ENCODE measurements at regions of chr12 and their contacts with region 1.

Region 1: GRCh38 chr12:49945394-49946080 is 5.0 kb upstream of the AQP2 start:
- DNase-seq: peak; percentile 66 to 80 (median 71)
- H3K4me3 ChIP-seq: peak overlapping the region in 1 of 2 donors; percentile 12
- H3K4me3 Mint-ChIP-seq: peak overlapping the region; percentile 84 to 96 (median 89)
- H3K27ac ChIP-seq: peak overlapping the region; percentile 29
- H3K27ac Mint-ChIP-seq: peak overlapping the region; percentile 76 to 94 (median 89)
- H3K4me1 ChIP-seq: peaks cover 40% of the 10 kb centered on the region
- H3K4me1 Mint-ChIP-seq: peaks cover 16 to 54% (median 23%) of the 10 kb centered on the region in 4 donors
- H3K27me3 ChIP-seq: no peaks in the 10 kb centered on the region
- H3K27me3 Mint-ChIP-seq: peaks cover 0 to 3% of the 10 kb centered on the region in 2 donors

Region 2: GRCh38 chr12:49866859-49867579 is 78.5 kb before region 1 on chr12:
- CTCF ChIA-PET with region 1: interaction called, 17 read pairs
- POLR2A ChIA-PET with region 1: no interaction called
- intact Hi-C with region 1: no loop called
- DNase-seq: peak; percentile 65 to 73 (median 67)
- H3K4me3 ChIP-seq: no peak overlapping the region
- H3K4me3 Mint-ChIP-seq: no peak overlapping the region
- H3K27ac ChIP-seq: no peak overlapping the region
- H3K27ac Mint-ChIP-seq: no peak overlapping the region
- H3K4me1 ChIP-seq: no peaks in the 10 kb centered on the region
- H3K4me1 Mint-ChIP-seq: no peaks in the 10 kb centered on the region
- H3K27me3 ChIP-seq: no peaks in the 10 kb centered on the region
- H3K27me3 Mint-ChIP-seq: peaks cover 2 to 4% of the 10 kb centered on the region in 2 donors

Region 3: DNA sequence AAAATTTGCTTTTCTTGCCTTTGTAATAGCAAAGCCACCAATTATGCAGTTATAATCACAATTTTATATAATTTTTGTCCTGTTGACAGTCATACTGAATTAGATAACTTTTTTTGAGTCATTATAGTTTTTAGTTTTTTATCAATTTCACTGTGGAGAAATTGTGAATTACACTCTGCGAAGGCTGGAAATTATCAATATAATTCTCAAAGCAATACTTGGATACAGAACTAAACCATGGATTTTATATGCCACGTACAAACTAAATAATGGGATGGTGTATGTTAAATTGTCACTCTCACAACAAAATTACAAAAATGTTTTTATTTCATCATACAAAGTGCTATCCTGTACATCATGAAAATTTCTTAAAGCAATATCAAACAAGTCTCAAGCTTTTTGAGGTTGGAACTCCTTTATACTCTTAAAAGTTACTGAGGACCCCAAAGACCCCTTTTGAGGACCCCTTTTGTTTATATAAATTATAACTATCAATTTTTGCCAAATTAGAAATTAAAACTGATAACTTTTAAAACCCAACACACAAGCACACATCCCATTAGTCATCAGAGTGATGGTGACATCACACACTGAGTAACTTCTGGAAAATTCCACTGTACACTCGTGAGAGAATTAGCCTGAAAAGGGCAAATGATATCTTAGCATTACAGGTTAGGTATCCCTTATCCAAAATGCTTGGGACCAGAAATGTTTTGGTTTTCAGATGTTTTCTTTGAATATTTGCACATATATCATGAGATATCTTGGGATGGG is 14.8 kb before region 1 on chr12:
- CTCF ChIA-PET with region 1: interaction called, 35 read pairs
- POLR2A ChIA-PET with region 1: no interaction called
- intact Hi-C with region 1: no loop called
- DNase-seq: no peak
- H3K4me3 ChIP-seq: no peak overlapping the region
- H3K4me3 Mint-ChIP-seq: no peak overlapping the region
- H3K27ac ChIP-seq: no peak overlapping the region
- H3K27ac Mint-ChIP-seq: no peak overlapping the region
- H3K4me1 ChIP-seq: no peaks in the 10 kb centered on the region
- H3K4me1 Mint-ChIP-seq: no peaks in the 10 kb centered on the region
- H3K27me3 ChIP-seq: no peaks in the 10 kb centered on the region
- H3K27me3 Mint-ChIP-seq: peaks cover 0 to 3% of the 10 kb centered on the region in 2 donors

Region 4: DNA sequence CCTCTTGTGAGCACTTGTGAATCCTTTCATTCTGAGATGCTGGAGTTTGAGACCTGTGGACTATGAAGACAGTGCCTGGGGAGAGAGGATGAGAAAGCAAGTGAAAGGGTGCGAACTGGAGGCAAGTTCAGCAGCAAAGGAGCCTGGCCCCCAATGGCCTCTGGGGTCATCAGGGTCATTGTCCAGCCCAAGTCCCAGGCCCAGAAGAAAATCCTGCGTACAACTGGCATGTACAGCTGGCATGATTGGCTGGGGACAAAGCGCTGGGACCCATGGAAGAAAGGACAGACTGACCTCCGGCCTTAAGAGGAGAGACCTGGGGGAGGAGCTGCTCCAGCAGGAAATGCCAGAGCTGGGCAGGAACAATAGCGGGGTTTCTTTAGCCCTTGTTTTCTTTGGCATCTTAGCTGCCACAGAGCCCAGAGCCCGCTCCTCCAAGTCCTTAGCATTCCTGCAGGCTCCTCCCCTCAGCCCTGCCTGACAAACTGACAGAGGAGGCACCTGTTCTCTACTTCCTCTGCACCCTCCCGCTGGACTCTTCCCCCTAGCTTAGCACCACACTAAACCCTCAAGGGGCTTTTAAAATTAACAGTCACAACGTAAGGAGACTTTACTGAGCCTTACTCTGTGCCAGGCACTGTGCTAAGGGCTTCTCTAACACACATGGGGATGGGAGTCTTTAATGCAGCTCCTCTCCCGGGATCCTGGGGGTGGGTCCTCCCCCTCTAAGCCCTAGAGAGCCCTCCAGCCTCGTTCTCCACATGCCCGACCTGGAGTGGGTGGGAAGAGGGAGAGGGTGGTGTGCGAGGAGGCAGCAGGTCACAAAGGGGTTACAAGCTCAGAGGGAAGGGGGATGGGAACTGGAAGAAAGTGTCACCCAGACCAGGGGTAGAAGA is 14.3 kb after region 1 on chr12:
- CTCF ChIA-PET with region 1: interaction called, 44 read pairs
- POLR2A ChIA-PET with region 1: no interaction called
- intact Hi-C with region 1: no loop called
- DNase-seq: no peak
- H3K4me3 ChIP-seq: no peak overlapping the region
- H3K4me3 Mint-ChIP-seq: peak overlapping the region in 6 of 8 donors; percentile 41 to 78 (median 60)
- H3K27ac ChIP-seq: no peak overlapping the region
- H3K27ac Mint-ChIP-seq: no peak overlapping the region
- H3K4me1 ChIP-seq: no peaks in the 10 kb centered on the region
- H3K4me1 Mint-ChIP-seq: peaks cover 6 to 13% (median 7%) of the 10 kb centered on the region in 4 donors
- H3K27me3 ChIP-seq: peaks cover 20% of the 10 kb centered on the region
- H3K27me3 Mint-ChIP-seq: peaks cover 53 to 66% of the 10 kb centered on the region in 2 donors

Region 5: GRCh38 chr12:50918584-50919316 is 973.2 kb after region 1 on chr12:
- CTCF ChIA-PET with region 1: no interaction called
- POLR2A ChIA-PET with region 1: no interaction called
- intact Hi-C with region 1: no loop called
- DNase-seq: no peak
- H3K4me3 ChIP-seq: no peak overlapping the region
- H3K4me3 Mint-ChIP-seq: no peak overlapping the region
- H3K27ac ChIP-seq: no peak overlapping the region
- H3K27ac Mint-ChIP-seq: no peak overlapping the region
- H3K4me1 ChIP-seq: no peaks in the 10 kb centered on the region
- H3K4me1 Mint-ChIP-seq: peaks cover under 1 to 2% (median 1%) of the 10 kb centered on the region in 4 donors
- H3K27me3 ChIP-seq: no peaks in the 10 kb centered on the region
- H3K27me3 Mint-ChIP-seq: peaks cover 6 to 12% of the 10 kb centered on the region in 2 donors